ENCODE measurements at regions of chr5 and their contacts with region 1.

Region 1: GRCh38 chr5:122864400-122864799 is 19.0 kb downstream of the SNX24 start:
- DNase-seq: peak; percentile 73
- H3K4me3 Mint-ChIP-seq: peak overlapping the region; percentile 14
- H3K27ac Mint-ChIP-seq: peak overlapping the region; percentile 72
- H3K4me1 Mint-ChIP-seq: peaks cover 16% of the 10 kb centered on the region
- H3K27me3 Mint-ChIP-seq: no peaks in the 10 kb centered on the region

Region 2: GRCh38 chr5:122805481-122805880 is 58.9 kb before region 1 on chr5:
- CTCF ChIA-PET with region 1: no interaction called
- POLR2A ChIA-PET with region 1: no interaction called
- intact Hi-C with region 1: no loop called
- DNase-seq: no peak
- H3K4me3 Mint-ChIP-seq: no peak overlapping the region
- H3K27ac Mint-ChIP-seq: no peak overlapping the region
- H3K4me1 Mint-ChIP-seq: no peaks in the 10 kb centered on the region
- H3K27me3 Mint-ChIP-seq: no peaks in the 10 kb centered on the region

Region 3: GRCh38 chr5:122845229-122846050 is 19.0 kb before region 1 on chr5 and contains the start of gene SNX24:
- CTCF ChIA-PET with region 1: no interaction called
- POLR2A ChIA-PET with region 1: no interaction called
- intact Hi-C with region 1: loop called (anchors 1 kb)
- DNase-seq: peak; percentile 83
- H3K4me3 Mint-ChIP-seq: peak within 1 kb of the TSS; percentile 81
- H3K27ac Mint-ChIP-seq: peak within 1 kb of the TSS; percentile 28
- H3K4me1 Mint-ChIP-seq: peaks cover 24% of the 10 kb centered on the region
- H3K27me3 Mint-ChIP-seq: no peaks in the 10 kb centered on the region
- total RNA-seq, gene SNX24: 6.4 to 7.5 TPM

Region 4: DNA sequence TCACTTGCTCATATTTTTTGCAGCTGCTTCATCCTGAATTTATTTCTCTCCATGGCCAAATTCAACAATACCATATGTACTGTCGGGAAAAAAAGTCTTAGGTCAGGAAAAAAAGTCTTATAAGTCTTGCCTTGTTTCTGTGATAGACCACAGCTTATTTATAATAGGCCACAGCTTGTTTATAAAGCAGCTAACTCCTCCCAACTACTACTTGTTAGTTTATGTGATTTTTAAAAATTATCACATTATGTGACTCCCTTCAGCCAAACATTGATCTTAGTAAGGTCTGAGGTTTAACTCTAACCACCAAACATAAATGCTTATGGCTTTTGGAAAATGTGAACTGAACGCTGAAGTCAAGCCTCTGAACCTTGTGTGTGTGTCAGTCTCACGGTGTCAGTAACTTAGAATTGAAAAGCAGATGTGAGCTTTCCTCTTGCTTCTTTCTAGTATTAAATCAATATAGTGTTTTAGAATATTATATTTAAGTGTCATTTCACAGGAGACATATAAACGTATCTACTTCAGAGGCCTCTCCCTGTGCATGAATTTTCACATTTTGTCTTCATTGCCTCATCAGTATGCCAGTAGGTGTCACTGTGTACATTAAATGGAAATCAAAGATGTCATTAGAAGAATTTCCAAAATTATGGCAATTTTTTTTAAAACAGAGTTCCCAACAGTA is 32.3 kb after region 1 on chr5:
- CTCF ChIA-PET with region 1: no interaction called
- POLR2A ChIA-PET with region 1: no interaction called
- intact Hi-C with region 1: no loop called
- DNase-seq: no peak
- H3K4me3 Mint-ChIP-seq: no peak overlapping the region
- H3K27ac Mint-ChIP-seq: no peak overlapping the region
- H3K4me1 Mint-ChIP-seq: peaks cover 2% of the 10 kb centered on the region
- H3K27me3 Mint-ChIP-seq: no peaks in the 10 kb centered on the region

Region 5: DNA sequence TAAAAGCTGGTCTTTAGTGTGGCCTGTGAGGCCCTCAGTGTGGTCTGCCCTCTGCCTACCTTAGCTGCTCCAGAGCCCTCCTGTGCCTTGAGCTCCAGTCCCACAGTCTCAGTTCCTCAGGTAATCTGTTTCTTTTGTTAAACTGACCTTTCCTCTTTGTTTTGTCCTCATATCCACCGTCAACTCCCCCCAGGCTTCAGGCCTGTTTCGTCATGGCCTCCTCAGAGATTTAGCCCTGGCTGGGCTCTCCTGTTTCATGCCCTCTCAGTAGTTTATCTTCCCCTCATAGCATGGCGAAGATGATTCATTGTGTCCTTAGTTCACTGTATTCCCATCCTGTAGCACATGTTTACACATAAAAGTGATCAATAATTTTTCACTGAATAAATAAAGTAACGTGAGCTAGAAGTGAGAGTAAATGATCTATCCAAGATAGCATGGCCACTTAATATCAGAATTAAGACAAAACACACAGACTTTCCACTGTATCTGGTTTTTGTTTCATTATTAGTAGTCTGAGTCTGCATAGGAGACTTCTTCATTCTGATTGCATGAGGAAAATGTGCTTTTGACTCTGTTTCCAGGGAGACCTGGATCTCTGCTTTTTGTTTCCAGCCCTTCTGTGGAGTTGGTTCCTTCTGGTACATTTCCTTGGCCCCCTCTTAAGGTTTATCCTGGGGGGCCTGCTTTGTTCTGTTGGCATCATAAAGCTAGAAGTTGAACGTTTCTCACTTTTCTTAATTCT is 51.5 kb after region 1 on chr5:
- CTCF ChIA-PET with region 1: no interaction called
- POLR2A ChIA-PET with region 1: no interaction called
- intact Hi-C with region 1: loop called (anchors 5 kb)
- DNase-seq: no peak
- H3K4me3 Mint-ChIP-seq: no peak overlapping the region
- H3K27ac Mint-ChIP-seq: no peak overlapping the region
- H3K4me1 Mint-ChIP-seq: peaks cover 8% of the 10 kb centered on the region
- H3K27me3 Mint-ChIP-seq: no peaks in the 10 kb centered on the region

Measured in activated CD4-positive, alpha-beta memory T cell treated with anti-CD3 and anti-CD28 coated beads for 36 hours (primary cell).